GM12878 (cell line): ENCODE measurements at regions of chr16 and their contacts with region 1.

Region 1: GRCh38 chr16:28069971-28070794 is 6.7 kb upstream of the GSG1L start:
- DNase-seq: no peak
- ATAC-seq: no peak
- H3K4me3 ChIP-seq: no peak overlapping the region
- H3K27ac ChIP-seq: no peak overlapping the region
- H3K4me1 ChIP-seq: no peaks in the 10 kb centered on the region
- H3K27me3 ChIP-seq: no peaks in the 10 kb centered on the region; a peak in 1 of 4 replicates
- CTCF ChIP-seq: no peak
- EP300 ChIP-seq: no peak
- POLR2A ChIP-seq: no peak
- RAD21 ChIP-seq: no peak

Region 2: DNA sequence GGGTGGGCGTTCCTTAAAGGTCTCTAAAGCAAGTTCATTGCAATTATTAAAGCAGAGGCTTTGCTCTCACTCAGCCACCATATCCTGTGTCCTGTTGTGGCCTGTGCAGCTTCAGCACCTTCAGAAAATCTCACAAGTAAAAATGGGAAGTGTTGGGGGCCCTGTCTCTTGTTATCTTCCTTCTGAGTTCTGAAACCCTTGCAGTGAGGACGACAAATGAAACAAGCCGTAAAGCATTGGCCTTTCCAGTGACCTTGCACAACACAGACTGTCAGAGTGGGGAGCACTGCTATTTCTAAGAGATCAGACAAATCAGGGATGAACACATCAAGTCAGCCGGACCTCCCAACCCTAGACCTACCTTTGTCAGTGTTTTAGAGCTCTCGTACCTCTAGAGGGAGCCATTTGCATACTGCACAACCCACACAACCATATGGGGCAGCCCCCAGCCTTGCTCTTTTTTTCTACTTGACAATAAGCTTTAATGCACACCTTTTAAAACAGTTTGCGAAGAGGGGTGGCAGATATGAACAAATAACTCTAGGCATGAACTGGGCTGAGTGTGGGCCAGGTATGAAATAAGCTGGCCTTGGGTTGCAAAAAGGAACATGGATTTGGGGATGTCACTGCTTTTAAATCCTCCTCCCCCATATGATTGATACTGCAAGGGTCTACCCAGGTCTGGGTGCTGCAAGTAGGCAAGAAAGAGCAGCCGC is 430.5 kb before region 1 on chr16:
- CTCF ChIA-PET with region 1: interaction called, 28 read pairs
- POLR2A ChIA-PET with region 1: no interaction called
- RAD21 ChIA-PET with region 1: interaction called, 7 read pairs
- SMC1A ChIA-PET with region 1: interaction called, 9 read pairs
- in situ Hi-C with region 1: loop called (anchors 25 kb)
- intact Hi-C with region 1: loop called (anchors 5 kb)
- DNase-seq: peak; percentile 2
- ATAC-seq: peak; percentile 97
- H3K4me3 ChIP-seq: no peak overlapping the region
- H3K27ac ChIP-seq: no peak overlapping the region
- H3K4me1 ChIP-seq: peaks cover 12% of the 10 kb centered on the region
- H3K27me3 ChIP-seq: no peaks in the 10 kb centered on the region
- CTCF ChIP-seq: peak; percentile 68 to 89 (median 81)
- EP300 ChIP-seq: no peak
- POLR2A ChIP-seq: no peak
- RAD21 ChIP-seq: peak; percentile 79

Region 3: GRCh38 chr16:27972500-27972899 is 97.7 kb before region 1 on chr16:
- CTCF ChIA-PET with region 1: interaction called, 41 read pairs
- POLR2A ChIA-PET with region 1: no interaction called
- RAD21 ChIA-PET with region 1: interaction called, 15 read pairs
- SMC1A ChIA-PET with region 1: interaction called, 16 read pairs
- in situ Hi-C with region 1: no loop called
- intact Hi-C with region 1: loop called (anchors 1 kb)
- DNase-seq: peak; percentile 17
- ATAC-seq: peak; percentile 90
- H3K4me3 ChIP-seq: no peak overlapping the region
- H3K27ac ChIP-seq: no peak overlapping the region
- H3K4me1 ChIP-seq: no peaks in the 10 kb centered on the region
- H3K27me3 ChIP-seq: no peaks in the 10 kb centered on the region
- CTCF ChIP-seq: peak; percentile 69 to 73 (median 71)
- EP300 ChIP-seq: no peak
- POLR2A ChIP-seq: no peak
- RAD21 ChIP-seq: peak; percentile 58

Region 4: DNA sequence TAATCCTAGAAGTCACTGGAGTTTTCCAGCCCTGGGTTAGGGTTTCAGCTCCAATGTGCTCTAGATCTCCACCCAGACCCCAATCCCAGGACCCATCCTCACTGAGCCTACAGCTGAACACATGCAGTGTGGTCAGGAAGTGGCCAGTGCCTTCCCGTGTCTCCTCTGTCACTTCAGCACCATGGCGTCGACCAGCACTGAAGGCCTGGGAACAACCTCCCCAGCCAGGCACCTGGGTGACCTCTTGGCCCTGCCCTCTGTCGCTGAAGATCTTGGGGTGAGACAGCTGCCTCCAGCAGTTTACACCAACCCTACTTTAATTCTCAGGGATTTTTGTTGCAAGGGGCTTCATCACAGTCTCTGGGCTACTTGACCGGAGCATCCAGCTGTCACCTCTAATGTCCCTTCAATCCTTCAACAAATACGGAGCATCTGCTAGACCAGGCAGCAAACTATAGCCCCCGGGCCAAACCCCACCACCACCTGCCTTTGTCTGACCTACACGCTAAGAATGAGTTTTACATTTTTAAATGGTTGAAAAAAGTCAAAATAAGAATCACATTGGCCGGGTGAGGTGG is 11.3 kb after region 1 on chr16:
- CTCF ChIA-PET with region 1: interaction called, 10 read pairs
- POLR2A ChIA-PET with region 1: no interaction called
- RAD21 ChIA-PET with region 1: no interaction called
- SMC1A ChIA-PET with region 1: interaction called, 5 read pairs
- in situ Hi-C with region 1: no loop called
- intact Hi-C with region 1: no loop called
- DNase-seq: no peak
- ATAC-seq: no peak
- H3K4me3 ChIP-seq: no peak overlapping the region
- H3K27ac ChIP-seq: no peak overlapping the region
- H3K4me1 ChIP-seq: no peaks in the 10 kb centered on the region
- H3K27me3 ChIP-seq: no peaks in the 10 kb centered on the region
- CTCF ChIP-seq: no peak
- EP300 ChIP-seq: no peak
- POLR2A ChIP-seq: no peak
- RAD21 ChIP-seq: no peak